Ovary (tissue), 10 donors: ENCODE measurements at regions of chr14 and their contacts with region 1.

Region 1: DNA sequence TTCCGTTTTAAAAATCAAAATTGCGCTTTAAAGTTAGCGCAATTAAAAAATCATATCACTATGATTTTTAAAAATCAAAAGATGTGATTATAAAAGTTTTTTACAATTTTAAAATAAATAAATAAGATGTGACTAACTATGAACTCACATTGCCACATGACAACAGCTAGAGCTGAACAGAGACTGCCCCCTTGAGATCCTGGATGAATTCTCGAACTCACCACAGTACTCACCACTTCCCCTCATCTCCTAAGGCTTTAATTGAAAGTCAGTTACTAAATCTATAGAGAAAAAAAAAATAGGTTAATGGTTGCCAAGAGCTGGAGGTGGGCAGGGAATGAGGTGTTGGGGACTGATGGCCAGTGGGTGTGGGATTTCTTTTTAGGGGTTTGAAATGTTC is 384.2 kb downstream of the ZFP36L1 start:
- DNase-seq: no peak
- H3K4me3 ChIP-seq: no peak overlapping the region
- H3K27ac ChIP-seq: no peak overlapping the region
- H3K4me1 ChIP-seq: peaks cover 13% of the 10 kb centered on the region
- H3K27me3 ChIP-seq: no peaks in the 10 kb centered on the region
- CTCF ChIP-seq: no peak
- EP300 ChIP-seq: no peak
- POLR2A ChIP-seq: no peak

Region 2: GRCh38 chr14:68510201-68511128 is 101.8 kb after region 1 on chr14:
- intact Hi-C with region 1: loop called in 1 of 4 experiments (anchors 10 kb)
- DNase-seq: peak in 4 of 5 donors; percentile 47 to 73 (median 60)
- H3K4me3 ChIP-seq: no peak overlapping the region
- H3K27ac ChIP-seq: peak overlapping the region in 1 of 2 donors; percentile 61
- H3K4me1 ChIP-seq: peaks cover 32% of the 10 kb centered on the region
- H3K27me3 ChIP-seq: no peaks in the 10 kb centered on the region
- CTCF ChIP-seq: no peak
- EP300 ChIP-seq: no peak
- POLR2A ChIP-seq: no peak

Region 3: DNA sequence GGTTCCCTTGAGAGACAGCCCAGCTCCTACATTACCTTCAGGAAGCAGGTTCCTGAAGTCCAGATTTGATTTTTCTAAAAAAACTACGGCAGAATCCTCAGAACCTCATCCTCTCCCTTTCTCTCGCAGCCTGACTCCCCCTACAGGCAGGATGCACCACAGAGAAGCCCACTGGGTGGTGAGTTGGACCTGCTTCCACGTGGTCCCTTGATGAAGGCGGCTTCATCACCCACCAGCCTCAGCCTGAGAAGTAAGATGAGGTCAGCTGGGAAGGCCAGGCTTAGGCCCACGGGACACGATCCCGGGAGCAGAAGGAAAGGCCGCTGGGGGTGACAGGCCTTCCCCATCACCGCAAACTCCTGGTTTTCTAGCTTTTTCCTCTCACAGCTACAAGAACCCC is 487.5 kb after region 1 on chr14:
- intact Hi-C with region 1: no loop called
- DNase-seq: no peak
- H3K4me3 ChIP-seq: no peak overlapping the region
- H3K27ac ChIP-seq: no peak overlapping the region
- H3K4me1 ChIP-seq: no peaks in the 10 kb centered on the region
- H3K27me3 ChIP-seq: no peaks in the 10 kb centered on the region
- CTCF ChIP-seq: no peak
- EP300 ChIP-seq: no peak
- POLR2A ChIP-seq: no peak